ENCODE measurements at regions of chr17 and their contacts with region 1.

Region 1: DNA sequence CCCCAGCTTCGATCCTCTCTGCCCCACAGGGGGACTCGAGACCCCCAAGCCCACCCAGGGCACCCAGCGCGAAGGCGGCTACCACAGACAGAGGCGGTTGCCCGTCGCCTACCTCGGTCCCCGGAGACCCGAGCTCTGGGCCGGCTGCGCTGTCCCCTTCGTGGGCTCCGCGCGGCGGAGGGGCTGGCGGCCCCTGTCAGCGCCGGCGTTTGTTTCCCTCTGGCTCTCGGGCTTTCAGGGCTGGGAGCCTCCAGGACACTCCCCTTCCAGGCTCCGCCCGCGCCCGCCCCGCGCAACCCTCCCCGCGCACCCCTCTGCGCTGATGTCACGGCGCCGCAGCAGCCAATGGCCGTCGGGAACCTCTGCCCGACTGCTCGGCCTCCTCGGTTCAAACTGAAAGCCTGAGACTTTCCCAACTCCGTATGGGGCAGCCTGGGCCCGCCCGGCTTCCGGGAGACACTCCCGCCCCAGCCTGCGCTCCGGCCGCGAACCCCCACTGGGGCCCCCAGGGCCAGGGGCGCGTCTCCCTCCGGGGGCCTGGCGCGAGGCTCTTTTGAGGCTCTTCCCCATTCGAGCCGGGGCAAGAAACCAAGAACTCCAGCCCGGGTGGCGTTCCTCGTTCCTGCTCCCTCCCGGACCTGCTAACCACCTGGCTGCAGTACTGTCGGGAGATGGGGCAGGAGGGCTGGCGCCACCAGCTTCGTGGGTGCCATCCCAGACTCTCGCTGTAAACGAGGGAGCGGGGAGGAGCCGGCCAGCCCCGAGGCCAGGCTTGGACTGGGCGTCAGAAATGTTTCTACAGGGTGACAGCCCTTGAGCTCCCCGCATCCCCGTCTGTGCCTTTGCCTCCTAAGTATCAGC is at the start of gene CDC42EP4:
- DNase-seq: peak; percentile 99
- total RNA-seq, gene CDC42EP4: 41.3 TPM

Region 2: GRCh38 chr17:73156166-73156840 is 155.7 kb before region 1 on chr17:
- intact Hi-C with region 1: no loop called
- DNase-seq: peak; percentile 85

Region 3: GRCh38 chr17:73240561-73240960 is 71.5 kb before region 1 on chr17:
- intact Hi-C with region 1: no loop called
- DNase-seq: no peak

Region 4: DNA sequence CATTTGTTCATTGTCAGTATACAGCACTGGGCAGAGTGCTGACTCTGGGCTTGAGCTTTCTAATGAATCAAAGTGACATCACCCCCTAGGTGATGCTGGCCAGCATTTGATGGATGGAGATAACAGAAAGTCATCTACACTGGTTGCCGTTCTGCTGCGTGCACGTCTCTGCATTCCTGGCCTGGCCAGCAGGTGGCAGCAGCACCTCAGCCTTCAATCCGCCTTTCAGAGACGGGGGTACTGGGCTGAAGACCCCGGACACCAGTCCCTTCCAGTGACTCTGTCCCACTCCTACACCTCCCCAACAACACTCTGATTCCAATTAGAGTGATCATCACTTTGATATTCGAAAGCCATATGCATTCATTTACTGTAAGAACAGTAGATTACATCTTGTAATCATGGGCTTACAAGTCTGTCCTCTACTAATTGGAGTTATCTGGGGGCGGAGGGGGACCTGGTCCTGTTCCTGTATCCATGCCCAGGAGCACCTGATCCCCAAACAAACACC is 56.3 kb before region 1 on chr17:
- intact Hi-C with region 1: loop called (anchors 10 kb)
- DNase-seq: no peak

Region 5: DNA sequence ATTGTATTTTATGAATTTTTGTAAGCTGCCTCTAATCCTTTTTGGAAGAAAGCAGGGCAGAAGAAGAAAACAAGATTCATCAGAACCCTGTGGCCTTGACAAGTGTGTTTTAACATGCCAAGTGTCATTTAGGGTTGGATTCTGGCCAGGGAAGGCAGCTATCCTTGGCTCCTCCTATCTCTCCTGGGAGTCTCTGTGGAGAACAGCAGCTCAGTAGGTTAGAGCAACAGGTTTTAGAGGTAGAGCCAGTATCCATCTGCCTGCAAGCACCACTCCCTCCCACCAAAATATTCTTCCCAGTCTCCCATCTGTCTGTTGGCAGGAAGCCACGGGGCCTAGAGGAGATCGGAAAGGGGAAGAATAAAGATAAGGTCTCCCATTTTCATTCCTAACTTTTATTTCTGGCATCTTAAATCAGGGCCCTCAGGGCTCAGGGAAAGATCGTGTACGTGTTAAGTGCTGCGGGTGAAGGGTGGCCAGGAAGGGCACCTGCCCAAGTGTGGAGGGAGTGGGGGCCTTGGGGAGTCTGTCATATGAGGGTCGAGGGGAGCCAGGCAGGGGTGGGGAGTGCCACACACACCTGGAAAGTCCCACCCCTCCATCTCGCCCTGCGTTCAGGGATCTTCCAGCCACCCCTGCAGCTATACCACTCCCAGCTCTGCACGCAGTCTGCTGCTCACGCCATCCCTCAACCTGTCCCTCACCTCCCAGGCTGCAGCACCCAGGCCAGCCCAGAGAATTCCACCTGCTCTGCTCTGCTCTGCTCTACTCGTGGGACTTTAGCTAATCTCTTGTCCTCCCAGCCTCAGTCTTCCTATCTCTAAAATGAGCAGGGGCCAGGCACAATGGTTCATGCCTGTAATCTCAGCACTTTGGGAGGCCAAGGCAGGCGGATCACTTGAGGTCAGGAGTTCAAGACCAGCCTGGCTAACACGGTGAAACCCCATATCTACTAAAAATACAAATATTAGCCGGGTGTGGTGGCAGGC is 33.3 kb before region 1 on chr17:
- intact Hi-C with region 1: loop called (anchors 5 kb)
- DNase-seq: no peak

Region 6: GRCh38 chr17:73291964-73292531 is 20.0 kb before region 1 on chr17:
- intact Hi-C with region 1: loop called (anchors 1 kb)
- DNase-seq: peak; percentile 88

Region 7: DNA sequence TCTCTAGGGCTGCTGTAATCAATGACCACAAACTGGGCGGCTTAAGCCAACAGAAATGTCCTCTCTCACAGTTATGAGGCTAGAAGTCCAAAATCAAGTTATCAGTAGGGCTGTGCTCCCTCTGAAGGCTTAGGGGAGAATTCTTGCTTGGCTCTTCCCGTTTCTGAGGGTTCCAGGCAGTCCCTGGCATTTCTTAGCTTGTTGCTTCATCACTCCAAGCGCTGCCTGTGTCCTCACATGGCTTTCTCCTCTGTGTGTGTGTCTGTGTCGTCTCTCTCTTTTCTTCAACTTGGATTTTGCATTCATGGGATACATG is 13.5 kb after region 1 on chr17:
- intact Hi-C with region 1: no loop called
- DNase-seq: no peak

Region 8: GRCh38 chr17:73365906-73366623 is 54.1 kb after region 1 on chr17:
- intact Hi-C with region 1: loop called (anchors 5 kb)
- DNase-seq: no peak

Region 9: GRCh38 chr17:73759734-73760438 is 447.9 kb after region 1 on chr17:
- intact Hi-C with region 1: loop called (anchors 10 kb)
- DNase-seq: no peak

Measured in cardiac septum (tissue), 1 donor.